CD4-positive, alpha-beta memory T cell (primary cell): ENCODE measurements at regions of chr7 and their contacts with region 1.

Region 1: DNA sequence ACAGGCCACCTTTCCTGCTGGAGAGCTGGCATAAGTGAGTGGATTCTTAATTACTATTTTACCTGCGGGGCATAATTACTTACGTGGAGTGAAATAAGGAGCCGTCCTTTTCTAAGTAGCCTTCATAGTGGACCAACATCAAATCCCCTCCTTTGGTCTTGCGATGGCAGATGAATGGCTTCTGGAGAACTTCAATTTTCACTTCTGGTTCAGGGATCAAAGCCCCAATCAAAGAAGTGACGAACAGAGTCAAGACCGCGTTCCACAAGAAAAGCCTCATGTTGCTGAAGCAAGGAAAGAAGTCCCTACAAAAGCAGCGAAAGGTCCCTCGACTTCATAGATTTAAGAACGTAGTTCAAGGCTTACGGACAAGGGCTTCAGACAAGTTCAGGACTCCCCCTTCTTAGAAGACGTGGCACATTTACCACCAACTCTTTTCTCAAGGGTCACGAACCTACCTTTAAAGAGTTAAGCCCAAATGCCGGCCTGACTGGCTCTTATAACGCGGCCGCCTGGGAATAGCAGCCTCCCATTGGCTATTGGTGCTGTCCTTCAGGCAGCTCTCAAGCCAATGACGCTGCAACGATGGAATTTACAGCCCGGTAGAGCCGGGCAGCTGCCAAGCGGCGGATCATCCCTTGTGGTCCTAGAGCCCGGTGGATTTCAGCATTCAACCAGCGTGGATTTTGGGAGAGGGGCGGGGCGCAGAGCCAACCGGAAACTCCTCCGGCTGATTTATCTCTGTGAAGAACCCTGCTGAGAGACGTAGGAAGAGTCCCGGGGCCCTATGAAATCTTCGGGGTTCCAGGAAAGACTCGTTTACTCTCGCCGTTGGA is at the start of gene FKBP14:
- DNase-seq: peak; percentile 88 to 94 (median 91)
- H3K4me3 ChIP-seq: peak within 1 kb of the TSS; percentile 70 to 87
- H3K4me3 Mint-ChIP-seq: peak within 1 kb of the TSS in 5 of 8 donors; percentile 94 to 98 (median 95)
- H3K27ac ChIP-seq: peak within 1 kb of the TSS; percentile 63
- H3K27ac Mint-ChIP-seq: peak within 1 kb of the TSS; percentile 85 to 95 (median 93)
- H3K4me1 ChIP-seq: peaks cover 45% of the 10 kb centered on the region
- H3K4me1 Mint-ChIP-seq: peaks cover 26 to 47% (median 36%) of the 10 kb centered on the region in 4 donors
- H3K27me3 ChIP-seq: no peaks in the 10 kb centered on the region
- H3K27me3 Mint-ChIP-seq: no peaks in the 10 kb centered on the region
- total RNA-seq, gene FKBP14: 6.0 to 6.3 TPM

Region 2: GRCh38 chr7:29988424-29989256 is 37.8 kb before region 1 on chr7:
- CTCF ChIA-PET with region 1: no interaction called
- POLR2A ChIA-PET with region 1: interaction called, 5 read pairs
- intact Hi-C with region 1: loop called (anchors 2 kb)
- DNase-seq: peak; percentile 7 to 38 (median 24)
- H3K4me3 ChIP-seq: peak overlapping the region in 1 of 2 donors; percentile 49
- H3K4me3 Mint-ChIP-seq: peak overlapping the region; percentile 61 to 86 (median 82)
- H3K27ac ChIP-seq: no peak overlapping the region
- H3K27ac Mint-ChIP-seq: peak overlapping the region in 4 of 7 donors; percentile 44 to 68 (median 58)
- H3K4me1 ChIP-seq: no peaks in the 10 kb centered on the region
- H3K4me1 Mint-ChIP-seq: peaks cover 6 to 14% (median 10%) of the 10 kb centered on the region in 4 donors
- H3K27me3 ChIP-seq: peaks cover 5% of the 10 kb centered on the region
- H3K27me3 Mint-ChIP-seq: peaks cover 39 to 47% of the 10 kb centered on the region in 2 donors

Region 3: GRCh38 chr7:30074422-30075030 is 48.1 kb after region 1 on chr7:
- CTCF ChIA-PET with region 1: no interaction called
- POLR2A ChIA-PET with region 1: no interaction called
- intact Hi-C with region 1: no loop called
- DNase-seq: peak in 4 of 5 donors; percentile 4 to 8 (median 8)
- H3K4me3 ChIP-seq: no peak overlapping the region
- H3K4me3 Mint-ChIP-seq: no peak overlapping the region
- H3K27ac ChIP-seq: no peak overlapping the region
- H3K27ac Mint-ChIP-seq: peak overlapping the region in 1 of 7 donors; percentile 25
- H3K4me1 ChIP-seq: no peaks in the 10 kb centered on the region
- H3K4me1 Mint-ChIP-seq: peaks cover 0 to 2% (median 0%) of the 10 kb centered on the region in 4 donors
- H3K27me3 ChIP-seq: no peaks in the 10 kb centered on the region
- H3K27me3 Mint-ChIP-seq: no peaks in the 10 kb centered on the region

Region 4: DNA sequence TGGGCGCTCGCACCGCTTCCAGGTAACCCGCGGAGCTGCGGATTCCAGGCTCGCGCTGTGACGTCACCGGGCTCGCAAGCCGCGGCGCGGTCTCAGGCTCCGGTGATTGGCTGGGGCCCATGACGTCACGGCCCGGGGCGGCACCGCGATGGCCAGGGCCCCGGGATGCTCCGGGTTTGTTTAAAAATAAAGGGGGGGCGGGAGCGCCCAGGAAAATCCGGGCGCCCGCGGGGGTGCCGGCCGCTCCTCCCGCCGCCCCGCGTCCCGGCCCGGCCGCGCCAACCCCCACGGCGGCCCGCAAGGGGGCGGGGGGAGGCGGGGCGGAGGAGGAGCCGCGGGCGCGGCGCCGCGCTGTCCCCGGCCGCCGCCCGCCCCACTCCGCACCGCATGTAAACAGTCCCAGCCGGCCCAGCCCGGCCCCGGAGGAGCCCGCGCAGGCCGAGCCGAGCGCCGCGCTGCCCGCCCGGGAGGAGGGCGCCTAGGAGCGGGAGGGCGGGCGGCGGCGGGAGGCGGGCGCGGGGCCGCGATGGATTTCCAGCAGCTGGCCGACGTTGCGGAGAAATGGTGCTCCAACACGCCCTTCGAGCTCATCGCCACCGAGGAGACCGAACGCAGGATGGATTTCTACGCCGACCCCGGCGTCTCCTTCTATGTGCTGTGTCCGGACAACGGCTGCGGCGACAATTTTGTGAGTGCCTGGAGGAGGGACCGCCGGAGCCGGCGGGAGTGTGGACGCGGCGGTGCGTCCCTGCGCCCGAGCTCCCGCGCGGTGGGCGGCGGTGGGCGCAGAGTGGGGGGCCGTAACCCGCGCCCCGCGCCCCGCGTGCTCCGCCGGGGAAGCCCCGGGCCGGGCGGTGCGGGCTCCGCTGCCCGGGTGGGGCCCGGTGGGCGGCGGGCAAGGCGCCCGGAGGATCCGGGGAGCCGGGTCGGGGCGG is 108.4 kb after region 1 on chr7 and contains the start of gene MTURN:
- CTCF ChIA-PET with region 1: no interaction called
- POLR2A ChIA-PET with region 1: interaction called, 19 read pairs
- intact Hi-C with region 1: loop called (anchors 1 kb)
- DNase-seq: peak; percentile 86 to 92 (median 89)
- H3K4me3 ChIP-seq: peak within 1 kb of the TSS; percentile 66 to 69
- H3K4me3 Mint-ChIP-seq: peak within 1 kb of the TSS; percentile 87 to 96 (median 94)
- H3K27ac ChIP-seq: peak within 1 kb of the TSS; percentile 17
- H3K27ac Mint-ChIP-seq: peak within 1 kb of the TSS; percentile 75 to 95 (median 95)
- H3K4me1 ChIP-seq: peaks cover 14% of the 10 kb centered on the region
- H3K4me1 Mint-ChIP-seq: peaks cover 5 to 23% (median 12%) of the 10 kb centered on the region in 4 donors
- H3K27me3 ChIP-seq: no peaks in the 10 kb centered on the region
- H3K27me3 Mint-ChIP-seq: no peaks in the 10 kb centered on the region
- total RNA-seq, gene MTURN: 18.1 to 19.2 TPM

Region 5: DNA sequence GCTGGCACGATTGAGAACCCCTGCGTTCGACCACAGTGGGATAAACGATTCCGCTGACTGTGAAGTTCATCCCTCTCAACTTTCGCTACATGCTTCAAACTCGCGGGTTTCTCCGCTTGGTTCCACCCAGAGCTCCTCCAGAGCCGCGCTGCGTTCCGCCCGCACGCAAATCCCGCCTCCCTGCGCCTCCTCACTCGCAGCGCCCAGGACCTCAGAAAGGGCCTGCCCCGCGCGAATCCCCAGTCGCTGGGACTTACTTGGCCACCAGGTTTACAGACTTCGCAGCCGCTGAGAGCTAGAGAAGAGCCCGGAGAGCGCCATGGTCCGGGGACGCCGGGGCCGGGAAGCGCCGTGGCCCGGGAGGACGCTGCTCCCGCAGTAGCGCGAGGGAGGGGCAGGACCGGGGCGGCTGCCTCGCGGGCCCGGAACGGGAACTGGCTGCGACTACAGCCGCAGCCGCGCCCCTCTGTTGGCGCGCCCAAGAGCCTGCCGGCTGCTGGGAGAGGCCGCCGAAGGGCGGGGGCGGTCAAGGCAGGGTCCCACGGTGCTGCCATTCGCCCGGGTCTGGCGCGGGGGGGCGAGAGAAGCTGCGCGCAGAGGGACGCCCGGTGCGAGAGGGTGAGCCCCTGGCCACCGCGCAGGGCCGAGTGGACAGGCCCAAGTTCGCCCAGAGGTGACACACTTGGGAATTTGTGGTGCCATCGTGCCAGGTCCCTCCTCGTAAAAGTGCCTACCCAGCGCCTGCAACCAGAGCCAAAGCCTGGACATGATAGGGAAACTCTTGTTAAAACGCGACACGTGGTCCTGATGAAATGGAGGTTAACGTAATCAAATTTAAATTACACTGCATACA is 452.1 kb after region 1 on chr7 and contains the start of gene NOD1:
- CTCF ChIA-PET with region 1: no interaction called
- POLR2A ChIA-PET with region 1: interaction called, 8 read pairs
- intact Hi-C with region 1: loop called (anchors 5 kb)
- DNase-seq: peak; percentile 54 to 72 (median 67)
- H3K4me3 ChIP-seq: peak within 1 kb of the TSS; percentile 70 to 98
- H3K4me3 Mint-ChIP-seq: peak within 1 kb of the TSS in 7 of 8 donors; percentile 94 to 98 (median 95)
- H3K27ac ChIP-seq: peak within 1 kb of the TSS; percentile 79
- H3K27ac Mint-ChIP-seq: peak within 1 kb of the TSS in 6 of 7 donors; percentile 77 to 96 (median 90)
- H3K4me1 ChIP-seq: peaks cover 44% of the 10 kb centered on the region
- H3K4me1 Mint-ChIP-seq: peaks cover 36 to 59% (median 41%) of the 10 kb centered on the region in 4 donors
- H3K27me3 ChIP-seq: no peaks in the 10 kb centered on the region
- H3K27me3 Mint-ChIP-seq: no peaks in the 10 kb centered on the region
- total RNA-seq, gene NOD1: 20.7 to 21.3 TPM

Region 6: GRCh38 chr7:30594549-30595435 is 568.3 kb after region 1 on chr7 and contains the start of gene GARS1:
- CTCF ChIA-PET with region 1: no interaction called
- POLR2A ChIA-PET with region 1: interaction called, 5 read pairs
- intact Hi-C with region 1: loop called (anchors 2 kb)
- DNase-seq: peak; percentile 89 to 91 (median 90)
- H3K4me3 ChIP-seq: peak within 1 kb of the TSS; percentile 97
- H3K4me3 Mint-ChIP-seq: peak within 1 kb of the TSS; percentile 95 to 100 (median 98)
- H3K27ac ChIP-seq: peak within 1 kb of the TSS; percentile 97
- H3K27ac Mint-ChIP-seq: peak within 1 kb of the TSS; percentile 98 to 100 (median 99)
- H3K4me1 ChIP-seq: peaks cover 48% of the 10 kb centered on the region
- H3K4me1 Mint-ChIP-seq: peaks cover 42 to 77% (median 58%) of the 10 kb centered on the region in 4 donors
- H3K27me3 ChIP-seq: no peaks in the 10 kb centered on the region
- H3K27me3 Mint-ChIP-seq: no peaks in the 10 kb centered on the region
- total RNA-seq, gene GARS1: 79.8 to 101 TPM